ENCODE measurements at regions of chr5 and their contacts with region 1.

Region 1: GRCh38 chr5:39948867-39949468 is 524.2 kb upstream of the DAB2 start:
- DNase-seq: no peak
- ATAC-seq: peak; percentile 62

Region 2: DNA sequence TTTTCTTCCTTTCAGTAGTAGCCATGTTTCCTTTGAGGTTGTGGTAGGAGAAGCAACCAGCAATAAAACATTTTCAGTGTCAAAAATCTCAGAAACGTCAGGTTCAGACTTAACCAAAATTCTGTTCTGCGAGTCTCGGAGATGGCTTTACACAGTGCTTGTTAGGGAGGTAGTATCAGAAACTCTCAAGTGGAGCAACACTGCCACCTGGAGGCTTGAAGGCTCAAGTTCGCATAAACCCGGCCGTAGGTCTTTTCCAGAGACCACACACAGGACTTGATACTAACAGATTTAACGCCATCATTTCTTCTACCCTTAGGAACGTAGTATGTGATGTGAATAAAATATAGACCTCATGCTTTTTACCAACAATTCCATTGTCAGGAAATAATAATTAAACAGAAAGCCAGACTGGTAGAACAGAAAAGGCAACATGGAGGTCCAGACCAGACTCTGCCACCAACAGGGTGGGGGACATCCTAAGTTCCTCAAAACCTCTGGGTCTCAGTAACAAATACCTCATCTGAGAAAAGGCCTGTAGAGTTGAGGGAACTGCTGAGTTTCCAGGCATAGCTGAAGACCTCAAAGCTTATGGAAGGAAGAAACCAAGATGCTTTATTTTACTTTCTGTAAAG is 739.3 kb after region 1 on chr5:
- intact Hi-C with region 1: loop called (anchors 5 kb)
- DNase-seq: peak; percentile 80
- ATAC-seq: peak; percentile 94

Region 3: DNA sequence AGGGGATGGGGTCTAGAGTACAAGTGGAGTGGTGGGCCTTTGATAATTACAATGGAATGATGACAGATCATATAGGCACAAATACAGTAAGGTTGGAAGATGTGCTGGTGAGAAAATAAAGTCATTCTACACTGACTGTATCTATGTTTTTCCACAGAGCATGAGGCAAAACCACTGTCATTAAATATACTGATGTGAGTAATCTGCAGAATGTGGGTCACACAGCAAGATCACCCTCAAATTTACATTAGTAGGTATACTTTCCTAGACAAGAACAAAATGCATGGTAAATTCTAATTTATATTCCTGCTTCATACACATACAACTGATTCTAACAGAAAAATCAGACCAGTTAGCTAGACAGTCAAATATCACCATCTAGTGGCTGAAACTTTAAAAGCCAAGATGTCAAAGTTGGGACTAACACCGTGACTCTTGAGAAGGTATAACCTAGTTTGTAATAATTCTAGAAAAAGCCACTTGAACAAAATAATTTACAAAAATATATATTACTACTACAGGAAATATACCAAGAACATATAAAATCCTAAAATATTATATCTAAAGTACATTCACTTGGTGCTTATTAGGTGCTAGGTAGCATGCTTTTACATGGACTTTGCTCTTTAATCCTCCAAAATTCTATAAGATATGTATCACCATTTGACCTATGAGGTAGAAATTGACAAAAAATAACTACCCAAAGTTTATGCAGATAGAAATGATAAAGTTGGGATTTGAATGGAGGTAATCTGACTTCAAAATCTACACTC is 787.3 kb after region 1 on chr5:
- intact Hi-C with region 1: loop called (anchors 10 kb)
- DNase-seq: no peak
- ATAC-seq: peak; percentile 63